Natural killer cell (primary cell): ENCODE measurements at regions of chr14 and their contacts with region 1.

Region 1: GRCh38 chr14:63840981-63841380 is 11.8 kb upstream of the SYNE2 start:
- DNase-seq: peak; percentile 68 to 77
- ATAC-seq: peak; percentile 84 to 98 (median 94)
- H3K4me3 ChIP-seq: no peak overlapping the region
- H3K4me3 Mint-ChIP-seq: no peak overlapping the region
- H3K27ac ChIP-seq: no peak overlapping the region
- H3K27ac Mint-ChIP-seq: no peak overlapping the region
- H3K4me1 ChIP-seq: no peaks in the 10 kb centered on the region
- H3K4me1 Mint-ChIP-seq: no peaks in the 10 kb centered on the region
- H3K27me3 ChIP-seq: no peaks in the 10 kb centered on the region
- H3K27me3 Mint-ChIP-seq: no peaks in the 10 kb centered on the region
- CTCF ChIP-seq: peak; percentile 68

Region 2: GRCh38 chr14:63922696-63923421 is 81.9 kb after region 1 on chr14:
- intact Hi-C with region 1: no loop called
- DNase-seq: peak in 1 of 2 donors; percentile 20
- ATAC-seq: peak; percentile 24 to 81 (median 63)
- H3K4me3 ChIP-seq: no peak overlapping the region
- H3K4me3 Mint-ChIP-seq: no peak overlapping the region
- H3K27ac ChIP-seq: no peak overlapping the region
- H3K27ac Mint-ChIP-seq: peak overlapping the region in 1 of 2 donors; percentile 74
- H3K4me1 ChIP-seq: peaks cover 3% of the 10 kb centered on the region
- H3K4me1 Mint-ChIP-seq: peaks cover 28 to 31% of the 10 kb centered on the region in 2 donors
- H3K27me3 ChIP-seq: no peaks in the 10 kb centered on the region
- H3K27me3 Mint-ChIP-seq: no peaks in the 10 kb centered on the region
- CTCF ChIP-seq: no peak

Region 3: DNA sequence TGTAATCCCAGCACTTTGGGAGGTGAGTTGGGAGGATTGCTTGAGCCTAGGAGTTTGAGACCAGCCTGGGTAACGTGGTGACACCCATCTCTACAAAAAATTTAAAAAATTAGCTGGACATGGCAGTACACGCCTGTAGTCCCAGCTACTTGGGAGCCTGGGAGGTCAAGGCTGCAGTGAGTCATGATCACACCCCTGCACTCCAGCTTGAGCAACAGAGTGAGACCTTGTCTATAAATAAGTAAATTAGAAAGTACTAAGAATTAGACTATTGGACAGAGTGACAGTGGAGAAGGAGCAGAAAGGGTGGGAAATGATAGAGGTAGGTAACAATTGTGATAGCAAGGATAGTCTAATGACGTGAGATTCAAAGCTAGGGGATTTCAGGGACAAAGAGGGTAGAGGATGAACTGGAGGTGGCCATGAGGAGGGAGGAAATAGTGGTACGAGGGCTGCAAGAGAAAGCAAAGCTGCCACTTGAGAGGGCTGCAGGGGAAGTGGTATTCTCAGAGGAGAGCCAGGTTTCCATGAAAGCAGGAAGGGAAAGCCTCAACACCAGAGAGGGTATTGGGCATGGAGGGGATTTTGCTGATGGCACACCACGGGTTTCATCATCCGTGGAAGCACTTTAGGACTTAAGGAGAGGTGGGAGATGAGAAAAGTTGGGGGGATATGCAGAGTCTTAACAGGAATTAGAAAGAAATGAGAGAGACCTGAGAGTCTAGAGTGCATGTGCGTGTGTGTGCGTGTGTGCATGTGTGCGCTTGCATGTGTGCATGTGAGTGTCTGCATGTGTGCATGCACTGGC is 97.4 kb after region 1 on chr14:
- intact Hi-C with region 1: loop called (anchors 5 kb)
- DNase-seq: peak in 1 of 2 donors; percentile 55
- ATAC-seq: peak in 2 of 3 donors; percentile 63 to 71
- H3K4me3 ChIP-seq: no peak overlapping the region
- H3K4me3 Mint-ChIP-seq: no peak overlapping the region
- H3K27ac ChIP-seq: peak overlapping the region; percentile 60
- H3K27ac Mint-ChIP-seq: no peak overlapping the region
- H3K4me1 ChIP-seq: peaks cover 29% of the 10 kb centered on the region
- H3K4me1 Mint-ChIP-seq: peaks cover 19 to 26% of the 10 kb centered on the region in 2 donors
- H3K27me3 ChIP-seq: no peaks in the 10 kb centered on the region
- H3K27me3 Mint-ChIP-seq: no peaks in the 10 kb centered on the region
- CTCF ChIP-seq: no peak

Region 4: GRCh38 chr14:63993992-63994391 is 153.0 kb after region 1 on chr14:
- intact Hi-C with region 1: loop called (anchors 1 kb)
- DNase-seq: peak in 1 of 2 donors; percentile 36
- ATAC-seq: no peak
- H3K4me3 ChIP-seq: no peak overlapping the region
- H3K4me3 Mint-ChIP-seq: no peak overlapping the region
- H3K27ac ChIP-seq: no peak overlapping the region
- H3K27ac Mint-ChIP-seq: no peak overlapping the region
- H3K4me1 ChIP-seq: peaks cover 13% of the 10 kb centered on the region
- H3K4me1 Mint-ChIP-seq: peaks cover 18 to 24% of the 10 kb centered on the region in 2 donors
- H3K27me3 ChIP-seq: no peaks in the 10 kb centered on the region
- H3K27me3 Mint-ChIP-seq: no peaks in the 10 kb centered on the region
- CTCF ChIP-seq: no peak